Activated CD4-positive, alpha-beta memory T cell treated with anti-CD3 and anti-CD28 coated beads for 36 hours (primary cell): ENCODE measurements at regions of chr11 and their contacts with region 1.

Region 1: DNA sequence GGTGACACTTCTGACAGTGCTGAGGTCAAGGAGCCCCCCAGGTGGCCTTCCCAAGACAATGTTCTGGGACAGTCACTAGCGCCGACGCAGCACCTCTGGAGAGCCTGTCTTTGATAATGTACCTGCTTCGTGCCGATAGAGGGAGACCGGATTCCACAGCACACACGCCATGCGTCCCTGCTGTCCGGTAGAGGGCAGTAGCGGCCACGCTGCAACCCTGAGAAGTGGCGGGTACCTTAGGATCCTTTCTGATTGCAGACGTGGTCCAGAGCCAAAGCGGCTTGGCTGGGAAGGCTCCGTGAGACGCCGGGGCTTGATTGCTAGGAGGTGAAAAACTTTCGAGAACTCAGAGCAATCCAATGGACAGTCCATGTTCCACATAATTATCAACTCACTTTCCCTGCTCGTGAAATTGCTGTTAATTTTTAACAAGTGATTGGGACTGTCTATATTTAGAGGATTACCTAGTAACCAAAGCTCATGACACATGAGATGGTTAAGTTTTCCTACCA is 11.4 kb upstream of the BARX2 start:
- DNase-seq: peak; percentile 88
- H3K4me3 Mint-ChIP-seq: no peak overlapping the region
- H3K27ac Mint-ChIP-seq: no peak overlapping the region
- H3K4me1 Mint-ChIP-seq: no peaks in the 10 kb centered on the region
- H3K27me3 Mint-ChIP-seq: peaks cover 35% of the 10 kb centered on the region

Region 2: GRCh38 chr11:127943763-127944162 is 1420.4 kb before region 1 on chr11:
- CTCF ChIA-PET with region 1: no interaction called
- POLR2A ChIA-PET with region 1: no interaction called
- intact Hi-C with region 1: loop called (anchors 5 kb)
- DNase-seq: peak; percentile 43
- H3K4me3 Mint-ChIP-seq: no peak overlapping the region
- H3K27ac Mint-ChIP-seq: no peak overlapping the region
- H3K4me1 Mint-ChIP-seq: peaks cover 13% of the 10 kb centered on the region
- H3K27me3 Mint-ChIP-seq: peaks cover 19% of the 10 kb centered on the region

Region 3: GRCh38 chr11:129117595-129118350 is 246.4 kb before region 1 on chr11:
- CTCF ChIA-PET with region 1: interaction called, 3 read pairs
- POLR2A ChIA-PET with region 1: no interaction called
- intact Hi-C with region 1: loop called (anchors 1 kb)
- DNase-seq: peak; percentile 51
- H3K4me3 Mint-ChIP-seq: no peak overlapping the region
- H3K27ac Mint-ChIP-seq: no peak overlapping the region
- H3K4me1 Mint-ChIP-seq: no peaks in the 10 kb centered on the region
- H3K27me3 Mint-ChIP-seq: no peaks in the 10 kb centered on the region

Region 4: DNA sequence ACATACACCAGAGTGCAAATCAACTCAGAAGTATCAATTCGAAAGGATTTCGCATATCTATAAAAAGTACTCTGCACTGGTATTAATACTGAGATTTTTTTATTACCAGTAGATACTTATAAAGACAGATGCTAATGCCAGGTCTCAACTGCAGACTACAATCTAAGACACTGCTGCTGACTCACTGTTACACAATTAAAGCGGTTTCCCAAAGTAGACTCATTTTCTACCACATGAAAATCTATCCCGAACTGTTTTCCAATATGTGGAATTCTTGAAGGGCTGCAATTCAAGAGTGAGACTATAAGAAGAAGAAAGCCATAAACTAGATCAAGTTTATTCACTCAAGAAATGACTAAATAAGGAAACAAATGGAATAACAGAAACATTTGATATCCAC is 114.8 kb before region 1 on chr11:
- CTCF ChIA-PET with region 1: no interaction called
- POLR2A ChIA-PET with region 1: no interaction called
- intact Hi-C with region 1: no loop called
- DNase-seq: no peak
- H3K4me3 Mint-ChIP-seq: no peak overlapping the region
- H3K27ac Mint-ChIP-seq: no peak overlapping the region
- H3K4me1 Mint-ChIP-seq: peaks cover 19% of the 10 kb centered on the region
- H3K27me3 Mint-ChIP-seq: no peaks in the 10 kb centered on the region

Region 5: GRCh38 chr11:129375751-129376657 is 11.8 kb after region 1 on chr11 and contains the start of gene BARX2:
- CTCF ChIA-PET with region 1: interaction called, 12 read pairs
- POLR2A ChIA-PET with region 1: no interaction called
- intact Hi-C with region 1: loop called (anchors 1 kb)
- DNase-seq: peak; percentile 64
- H3K4me3 Mint-ChIP-seq: peak within 1 kb of the TSS; percentile 62
- H3K27ac Mint-ChIP-seq: no peak within 1 kb of the TSS
- H3K4me1 Mint-ChIP-seq: peaks cover 26% of the 10 kb centered on the region
- H3K27me3 Mint-ChIP-seq: peaks cover 68% of the 10 kb centered on the region
- total RNA-seq, gene BARX2: 0.29 to 0.71 TPM

Region 6: DNA sequence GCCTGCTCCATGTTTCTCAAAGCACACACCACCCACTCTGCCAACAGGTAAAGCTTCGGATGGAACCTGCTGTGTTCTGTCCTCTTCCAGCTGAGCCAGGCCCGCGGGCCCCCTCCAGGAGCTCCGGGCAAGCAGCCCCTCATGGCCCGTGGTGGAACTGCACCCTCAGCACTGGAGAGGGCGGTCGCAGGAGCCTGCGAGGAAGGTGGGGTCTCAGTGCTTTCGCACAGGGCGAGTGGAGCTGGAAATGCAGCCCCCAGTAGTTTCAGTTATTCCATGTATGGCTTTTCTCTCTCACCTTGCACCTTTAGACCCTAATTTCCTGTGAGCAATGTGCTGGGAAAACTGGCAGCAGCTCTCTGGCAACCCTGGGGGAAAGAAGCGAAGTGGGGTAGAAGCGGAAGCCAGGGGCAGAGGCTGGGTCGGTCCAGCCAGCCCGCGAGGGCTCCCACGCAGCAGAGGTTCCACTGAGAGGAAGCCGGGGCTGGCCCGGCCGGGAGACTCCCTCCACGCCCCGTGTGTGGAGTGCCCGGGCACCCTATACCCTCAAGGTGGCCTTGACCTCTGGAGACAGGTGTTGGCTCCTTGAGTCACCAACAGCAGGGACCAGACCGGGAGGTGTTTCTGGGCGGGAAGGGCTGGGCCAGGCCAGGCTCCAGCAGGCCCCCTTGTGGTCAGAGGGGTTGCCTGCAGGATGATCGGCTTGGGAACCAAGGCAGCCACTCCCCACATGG is 331.5 kb after region 1 on chr11:
- CTCF ChIA-PET with region 1: interaction called, 7 read pairs
- POLR2A ChIA-PET with region 1: no interaction called
- intact Hi-C with region 1: loop called (anchors 1 kb)
- DNase-seq: peak; percentile 80
- H3K4me3 Mint-ChIP-seq: peak overlapping the region; percentile 48
- H3K27ac Mint-ChIP-seq: no peak overlapping the region
- H3K4me1 Mint-ChIP-seq: peaks cover 10% of the 10 kb centered on the region
- H3K27me3 Mint-ChIP-seq: no peaks in the 10 kb centered on the region

Region 7: DNA sequence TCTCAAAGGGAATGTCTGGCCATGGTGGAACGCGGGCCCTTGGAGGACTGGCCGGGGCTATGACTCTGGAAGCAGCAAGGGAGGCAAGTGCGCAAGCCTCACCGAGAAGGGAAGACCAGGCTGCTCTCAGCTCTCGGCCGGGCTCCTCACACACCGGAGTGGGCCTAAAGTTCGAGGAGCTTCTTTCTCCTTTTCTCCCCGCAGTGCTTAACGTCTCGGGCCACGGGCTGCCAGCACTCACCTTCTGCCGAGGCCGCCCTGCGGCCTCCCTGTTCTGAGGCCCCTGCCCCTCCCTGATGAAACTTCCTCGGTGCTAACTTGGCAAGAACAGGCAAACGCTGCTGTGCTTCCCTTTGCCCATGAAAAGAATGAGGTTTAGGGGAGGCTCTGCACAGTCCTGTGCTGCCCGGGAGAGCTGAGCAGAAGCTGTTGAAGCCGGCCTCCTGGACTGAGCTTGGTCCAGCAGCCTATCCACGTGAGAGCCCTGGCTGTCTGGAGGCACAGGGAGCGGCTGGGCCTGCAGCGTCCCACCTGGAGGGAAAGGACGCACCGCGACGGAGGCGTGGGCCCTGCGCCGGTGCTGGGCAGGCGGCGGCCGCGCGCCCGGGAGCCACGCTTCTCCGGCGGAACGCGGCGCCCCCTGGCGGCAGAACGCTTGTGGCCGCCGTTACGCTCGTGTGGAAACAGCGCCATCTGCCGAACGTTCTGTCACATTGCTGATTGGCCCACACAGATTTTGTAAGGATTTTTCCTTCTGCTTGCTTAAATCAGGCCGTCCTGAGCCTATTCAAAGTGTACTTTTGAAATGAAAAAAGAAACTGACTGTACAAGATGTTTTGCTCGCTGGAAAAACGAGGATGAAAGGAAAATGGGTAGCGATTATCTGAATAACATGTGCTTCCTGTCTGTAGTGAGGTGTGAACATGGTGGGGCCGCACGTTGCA is 386.4 kb after region 1 on chr11:
- CTCF ChIA-PET with region 1: interaction called, 32 read pairs
- POLR2A ChIA-PET with region 1: no interaction called
- intact Hi-C with region 1: loop called (anchors 1 kb)
- DNase-seq: peak; percentile 85
- H3K4me3 Mint-ChIP-seq: no peak overlapping the region
- H3K27ac Mint-ChIP-seq: no peak overlapping the region
- H3K4me1 Mint-ChIP-seq: peaks cover 7% of the 10 kb centered on the region
- H3K27me3 Mint-ChIP-seq: peaks cover 3% of the 10 kb centered on the region